ENCODE measurements at regions of chr4 and their contacts with region 1.

Region 1: GRCh38 chr4:186765138-186765537 is 41.5 kb upstream of the FAT1 start:
- DNase-seq: peak; percentile 73
- ATAC-seq: peak; percentile 84
- H3K4me3 ChIP-seq: peak overlapping the region; percentile 11 to 46 (median 44); a peak in 4 of 6 replicates
- H3K27ac ChIP-seq: peak overlapping the region; percentile 80
- H3K4me1 ChIP-seq: peaks cover 71% of the 10 kb centered on the region
- H3K27me3 ChIP-seq: no peaks in the 10 kb centered on the region
- CTCF ChIP-seq: no peak
- EP300 ChIP-seq: no peak
- POLR2A ChIP-seq: peak in 1 of 2 experiments; percentile 55; a peak in 1 of 4 replicates
- RAD21 ChIP-seq: no peak

Region 2: DNA sequence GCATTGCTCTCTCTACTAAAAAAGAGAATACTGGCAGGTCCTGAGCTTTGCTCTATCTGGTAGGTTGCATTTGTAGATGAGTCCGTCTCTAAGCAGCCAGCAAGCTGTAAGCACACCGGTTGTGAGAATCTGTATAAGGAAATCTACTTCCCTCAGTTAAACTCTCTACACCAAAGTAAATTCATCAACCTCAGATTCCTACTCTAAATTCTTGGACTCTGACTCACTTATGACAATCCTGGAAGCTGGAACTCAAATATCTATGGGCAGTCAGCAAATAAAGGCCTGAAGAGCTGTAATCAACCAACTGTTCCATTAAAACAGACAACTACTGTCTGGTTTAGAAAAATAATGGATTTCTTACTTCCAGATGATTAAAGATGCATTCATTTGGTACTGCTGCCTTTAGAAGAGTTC is 79.4 kb before region 1 on chr4:
- CTCF ChIA-PET with region 1: no interaction called
- POLR2A ChIA-PET with region 1: no interaction called
- in situ Hi-C with region 1: no loop called
- intact Hi-C with region 1: loop called (anchors 5 kb)
- DNase-seq: peak; percentile 95
- ATAC-seq: peak; percentile 78
- H3K4me3 ChIP-seq: peak overlapping the region; percentile 4 to 64 (median 40); a peak in 4 of 6 replicates
- H3K27ac ChIP-seq: peak overlapping the region; percentile 89
- H3K4me1 ChIP-seq: peaks cover 93% of the 10 kb centered on the region
- H3K27me3 ChIP-seq: no peaks in the 10 kb centered on the region
- CTCF ChIP-seq: no peak
- EP300 ChIP-seq: peak in 1 of 2 experiments; percentile 86; a peak in 2 of 4 replicates
- POLR2A ChIP-seq: peak in 1 of 2 experiments; percentile 45; a peak in 1 of 4 replicates
- RAD21 ChIP-seq: no peak

Region 3: GRCh38 chr4:186717556-186717955 is 47.6 kb before region 1 on chr4:
- CTCF ChIA-PET with region 1: no interaction called
- POLR2A ChIA-PET with region 1: no interaction called
- in situ Hi-C with region 1: no loop called
- intact Hi-C with region 1: no loop called
- DNase-seq: no peak
- ATAC-seq: no peak
- H3K4me3 ChIP-seq: no peak overlapping the region
- H3K27ac ChIP-seq: no peak overlapping the region
- H3K4me1 ChIP-seq: peaks cover 73% of the 10 kb centered on the region
- H3K27me3 ChIP-seq: no peaks in the 10 kb centered on the region
- CTCF ChIP-seq: no peak
- EP300 ChIP-seq: no peak
- POLR2A ChIP-seq: no peak
- RAD21 ChIP-seq: no peak

Region 4: DNA sequence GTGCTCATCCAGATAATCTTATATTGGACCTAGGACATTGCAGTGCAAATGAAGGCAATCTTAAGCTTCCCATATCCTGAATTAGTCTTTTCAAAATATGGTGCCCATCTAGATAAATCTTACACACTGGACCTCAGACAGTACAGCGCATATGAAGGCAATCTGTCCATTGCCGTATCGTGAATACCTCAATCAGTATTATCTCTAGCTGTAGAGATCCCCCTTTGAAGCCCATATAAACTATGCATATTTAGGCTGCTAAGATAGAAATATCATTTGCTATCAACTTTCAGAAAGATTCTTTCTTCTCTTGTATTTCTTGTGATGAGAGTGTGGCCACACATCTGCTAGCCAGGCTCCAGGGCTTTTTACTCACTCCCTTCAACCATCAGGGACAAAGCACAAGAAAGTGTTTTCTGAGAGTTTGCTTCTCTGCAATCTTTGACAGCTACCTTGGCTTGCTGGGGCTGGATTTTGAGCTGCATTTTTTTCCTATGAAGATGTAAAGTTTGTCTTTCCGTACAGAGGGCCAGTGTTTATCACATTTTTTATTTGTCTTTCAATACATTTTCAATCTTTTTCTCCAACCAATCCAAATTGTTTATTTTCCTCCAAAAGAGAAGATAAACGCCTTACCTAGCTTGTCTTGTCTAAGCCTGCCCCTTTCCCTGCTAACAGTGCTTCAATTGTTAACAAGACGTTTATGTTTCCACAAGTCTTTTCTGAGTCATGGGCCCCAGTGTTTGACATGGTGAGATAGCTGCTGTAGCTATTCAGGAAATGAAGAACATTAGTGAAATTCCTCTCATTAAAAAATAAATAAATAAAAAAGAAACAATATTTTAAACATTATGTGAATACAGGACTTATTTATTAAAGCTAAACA is 16.1 kb after region 1 on chr4:
- CTCF ChIA-PET with region 1: no interaction called
- POLR2A ChIA-PET with region 1: interaction called, 7 read pairs
- in situ Hi-C with region 1: no loop called
- intact Hi-C with region 1: loop called (anchors 1 kb)
- DNase-seq: peak; percentile 93
- ATAC-seq: peak; percentile 95
- H3K4me3 ChIP-seq: no peak overlapping the region; a peak in 1 of 6 replicates
- H3K27ac ChIP-seq: peak overlapping the region; percentile 64
- H3K4me1 ChIP-seq: peaks cover 76% of the 10 kb centered on the region
- H3K27me3 ChIP-seq: no peaks in the 10 kb centered on the region
- CTCF ChIP-seq: no peak
- EP300 ChIP-seq: peak in 1 of 2 experiments; percentile 77; a peak in 2 of 4 replicates
- POLR2A ChIP-seq: no peak
- RAD21 ChIP-seq: no peak

Region 5: GRCh38 chr4:186808635-186809018 is 43.5 kb after region 1 on chr4:
- CTCF ChIA-PET with region 1: no interaction called
- POLR2A ChIA-PET with region 1: interaction called, 12 read pairs
- in situ Hi-C with region 1: no loop called
- intact Hi-C with region 1: loop called (anchors 5 kb)
- DNase-seq: no peak
- ATAC-seq: peak; percentile 46; the same call in 1 of the 3 replicates
- H3K4me3 ChIP-seq: no peak overlapping the region
- H3K27ac ChIP-seq: no peak overlapping the region
- H3K4me1 ChIP-seq: peaks cover 68% of the 10 kb centered on the region
- H3K27me3 ChIP-seq: no peaks in the 10 kb centered on the region
- CTCF ChIP-seq: no peak
- EP300 ChIP-seq: no peak
- POLR2A ChIP-seq: no peak
- RAD21 ChIP-seq: no peak

Region 6: GRCh38 chr4:186845137-186845842 is 80.2 kb after region 1 on chr4:
- CTCF ChIA-PET with region 1: no interaction called
- POLR2A ChIA-PET with region 1: no interaction called
- in situ Hi-C with region 1: no loop called
- intact Hi-C with region 1: no loop called
- DNase-seq: peak; percentile 20
- ATAC-seq: peak; percentile 66
- H3K4me3 ChIP-seq: no peak overlapping the region
- H3K27ac ChIP-seq: no peak overlapping the region
- H3K4me1 ChIP-seq: peaks cover 31% of the 10 kb centered on the region
- H3K27me3 ChIP-seq: no peaks in the 10 kb centered on the region
- CTCF ChIP-seq: no peak
- EP300 ChIP-seq: no peak
- POLR2A ChIP-seq: no peak
- RAD21 ChIP-seq: no peak